ENCODE measurements at regions of chr6 and their contacts with region 1.

Region 1: DNA sequence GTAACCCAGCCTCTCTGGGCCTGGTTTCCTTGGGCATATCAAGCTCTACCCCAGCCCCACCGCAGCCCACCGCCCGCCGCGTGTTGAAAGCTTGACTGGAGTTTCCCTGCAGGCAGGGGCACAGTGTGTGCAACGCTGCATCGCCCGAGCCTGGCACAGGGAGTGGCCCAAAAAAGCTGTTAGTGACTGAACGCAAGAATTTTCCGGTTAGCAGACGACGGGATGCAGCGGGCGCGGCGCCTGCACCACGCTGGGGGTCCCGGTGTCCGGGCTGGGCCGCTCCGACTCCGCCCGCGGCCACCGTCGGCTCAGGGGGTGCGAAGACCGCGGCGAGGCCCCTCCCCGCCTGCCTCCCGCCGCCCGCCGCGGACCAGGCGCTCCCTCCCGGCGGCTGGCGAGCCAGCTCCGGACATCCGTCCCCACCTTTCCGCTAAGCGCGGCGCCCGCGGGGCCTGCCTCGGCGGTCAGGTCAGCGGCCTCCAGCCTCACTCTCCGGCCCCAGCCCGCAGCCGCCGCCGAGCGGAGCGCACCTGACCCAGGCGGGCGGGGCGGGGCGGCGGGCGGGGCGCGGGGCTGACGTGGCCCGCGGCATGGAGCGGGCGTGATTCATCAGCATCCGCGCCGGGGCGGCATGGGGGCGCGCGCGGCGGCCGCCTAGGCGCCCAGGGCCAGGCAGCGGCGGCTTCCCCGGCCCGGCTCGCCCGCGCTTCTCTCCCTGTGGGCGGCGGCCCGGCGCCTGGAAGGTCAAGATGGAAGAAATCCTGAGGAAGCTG is at the start of gene ARFGEF3:
- DNase-seq: peak; percentile 72 to 91 (median 82)
- ATAC-seq: peak; percentile 86 to 93 (median 88)
- H3K4me3 ChIP-seq: peak within 1 kb of the TSS; percentile 43 to 89 (median 66)
- H3K27ac ChIP-seq: peak within 1 kb of the TSS; percentile 69 to 94 (median 88)
- H3K4me1 ChIP-seq: peaks cover 0 to 4% (median 0%) of the 10 kb centered on the region in 3 donors
- H3K27me3 ChIP-seq: no peaks in the 10 kb centered on the region
- CTCF ChIP-seq: no peak
- total RNA-seq, gene ARFGEF3: 13.7 to 19.0 (median 16.4) TPM

Region 2: DNA sequence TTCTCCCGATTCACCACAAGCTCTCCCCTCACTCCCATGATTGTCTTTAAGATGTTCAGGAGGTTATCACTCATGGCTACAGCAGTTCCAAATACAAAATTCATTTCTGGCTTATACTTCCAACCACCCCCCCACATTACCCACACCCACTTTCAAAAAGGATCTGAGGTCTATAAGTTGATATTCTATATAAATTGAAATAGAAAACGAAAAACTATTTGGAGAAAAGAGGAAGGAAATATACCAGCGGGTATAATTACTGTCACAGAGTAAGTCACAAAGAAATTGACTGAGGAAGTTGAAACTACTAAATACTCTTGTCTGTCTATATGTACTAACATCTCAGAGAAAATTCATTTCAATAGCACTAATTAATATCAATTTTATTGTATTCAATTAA is 407.2 kb before region 1 on chr6:
- intact Hi-C with region 1: no loop called
- DNase-seq: no peak
- ATAC-seq: no peak
- H3K4me3 ChIP-seq: no peak overlapping the region
- H3K27ac ChIP-seq: no peak overlapping the region
- H3K4me1 ChIP-seq: no peaks in the 10 kb centered on the region
- H3K27me3 ChIP-seq: no peaks in the 10 kb centered on the region
- CTCF ChIP-seq: no peak

Region 3: GRCh38 chr6:138231381-138231897 is 69.9 kb after region 1 on chr6:
- intact Hi-C with region 1: loop called in 1 of 3 experiments (anchors 10 kb)
- DNase-seq: peak in 1 of 6 donors; percentile 50
- ATAC-seq: peak; percentile 72 to 83 (median 80)
- H3K4me3 ChIP-seq: no peak overlapping the region
- H3K27ac ChIP-seq: peak overlapping the region; percentile 67 to 83 (median 73)
- H3K4me1 ChIP-seq: peaks cover 16 to 46% (median 41%) of the 10 kb centered on the region in 3 donors
- H3K27me3 ChIP-seq: no peaks in the 10 kb centered on the region
- CTCF ChIP-seq: no peak

Region 4: DNA sequence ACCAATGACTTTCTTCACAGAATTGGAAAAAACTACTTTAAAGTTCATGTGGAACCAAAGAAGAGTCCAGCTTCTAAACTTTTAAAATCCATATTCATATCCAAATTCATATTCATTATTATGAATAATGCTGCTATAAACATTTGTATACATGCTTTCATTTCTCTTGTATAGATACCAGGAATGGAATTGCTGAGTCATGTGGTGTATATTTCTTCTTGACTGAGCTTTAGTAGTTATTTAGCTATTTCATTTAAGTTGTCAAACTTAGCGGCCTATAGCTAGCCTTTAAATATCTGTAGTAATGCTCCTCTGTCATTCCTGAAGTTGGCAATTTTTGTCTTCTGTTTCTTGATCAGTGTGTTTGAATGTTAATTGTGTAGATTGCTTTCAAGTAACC is 196.4 kb after region 1 on chr6:
- intact Hi-C with region 1: no loop called
- DNase-seq: no peak
- ATAC-seq: no peak
- H3K4me3 ChIP-seq: no peak overlapping the region
- H3K27ac ChIP-seq: no peak overlapping the region
- H3K4me1 ChIP-seq: no peaks in the 10 kb centered on the region
- H3K27me3 ChIP-seq: no peaks in the 10 kb centered on the region
- CTCF ChIP-seq: no peak